ENCODE measurements at regions of chr16 and their contacts with region 1.

Region 1: GRCh38 chr16:56102183-56102686 is 89.1 kb upstream of the GNAO1 start:
- DNase-seq: peak; percentile 81 to 88 (median 84)
- ATAC-seq: peak; percentile 92 to 93
- H3K4me3 ChIP-seq: peak overlapping the region; percentile 11
- H3K27ac ChIP-seq: peak overlapping the region; percentile 95
- H3K4me1 ChIP-seq: no peaks in the 10 kb centered on the region
- H3K27me3 ChIP-seq: no peaks in the 10 kb centered on the region

Region 2: GRCh38 chr16:55955845-55956244 is 146.4 kb before region 1 on chr16:
- intact Hi-C with region 1: loop called in 1 of 4 experiments (anchors 10 kb)
- DNase-seq: peak; percentile 84 to 92 (median 88)
- ATAC-seq: peak; percentile 96 to 97
- H3K4me3 ChIP-seq: no peak overlapping the region
- H3K27ac ChIP-seq: peak overlapping the region; percentile 80
- H3K4me1 ChIP-seq: no peaks in the 10 kb centered on the region
- H3K27me3 ChIP-seq: no peaks in the 10 kb centered on the region

Region 3: DNA sequence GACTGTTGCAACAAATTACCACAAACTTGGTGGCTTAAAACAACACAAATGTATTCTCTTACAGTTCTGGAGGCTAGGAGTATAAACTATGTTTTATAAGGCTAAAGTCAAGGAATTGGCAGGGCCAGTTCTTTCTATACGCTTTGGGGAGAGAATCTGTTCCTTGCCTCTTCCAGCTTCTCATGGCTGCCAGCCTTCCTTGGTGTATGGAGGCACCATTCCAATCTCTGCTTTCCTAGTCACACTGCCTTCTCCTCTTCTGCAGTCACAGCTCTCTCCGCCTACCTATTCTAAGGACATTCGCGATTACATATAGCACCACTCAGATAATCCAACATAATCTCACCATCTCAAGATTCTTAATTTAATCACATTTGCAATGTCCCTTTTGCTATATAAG is 51.3 kb before region 1 on chr16:
- intact Hi-C with region 1: loop called in 1 of 4 experiments (anchors 5 kb)
- DNase-seq: no peak
- ATAC-seq: no peak
- H3K4me3 ChIP-seq: no peak overlapping the region
- H3K27ac ChIP-seq: no peak overlapping the region
- H3K4me1 ChIP-seq: no peaks in the 10 kb centered on the region
- H3K27me3 ChIP-seq: no peaks in the 10 kb centered on the region

Region 4: DNA sequence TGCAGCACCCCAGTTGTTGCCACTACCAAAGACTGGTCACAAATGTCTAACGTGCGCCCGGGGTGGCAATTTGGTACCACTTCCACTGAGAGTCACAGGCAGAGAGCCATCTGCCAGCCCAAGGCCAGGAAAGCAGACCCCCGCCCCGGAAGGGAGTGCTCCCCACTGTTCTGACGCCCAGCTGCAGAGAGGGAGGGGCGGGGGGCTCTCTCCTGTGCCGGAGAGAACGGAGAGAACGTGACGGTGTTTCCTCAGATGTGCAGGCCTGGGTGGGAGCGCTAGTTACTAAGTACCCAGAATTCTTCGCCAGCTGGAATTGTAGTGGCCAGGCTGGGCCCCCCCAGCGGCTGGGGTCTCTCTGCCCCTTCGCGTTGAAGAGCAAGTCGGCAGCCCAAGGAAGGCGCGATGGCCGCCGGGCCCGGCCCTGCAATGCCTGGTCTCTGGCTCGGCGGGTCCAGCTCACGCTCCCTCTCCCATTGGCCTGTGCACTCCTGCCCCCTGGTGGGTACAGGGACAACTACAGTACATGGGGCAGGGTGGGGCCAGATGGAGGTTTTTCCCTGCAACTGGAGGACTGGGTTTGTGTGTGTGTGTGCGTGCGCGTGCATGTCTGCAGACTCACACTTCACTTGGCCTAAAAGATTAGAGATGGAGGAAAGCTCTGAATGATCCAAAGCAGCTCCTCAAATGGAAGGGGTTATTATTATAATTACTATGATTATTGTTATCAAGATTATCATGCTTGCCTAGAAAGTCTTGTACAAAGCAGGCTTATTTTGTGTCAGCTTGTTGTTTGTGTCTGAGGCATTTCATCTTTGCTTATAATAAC is 216.0 kb after region 1 on chr16:
- intact Hi-C with region 1: loop called in 1 of 4 experiments (anchors 10 kb)
- DNase-seq: peak; percentile 85 to 95 (median 93)
- ATAC-seq: peak; percentile 95 to 96
- H3K4me3 ChIP-seq: peak overlapping the region; percentile 11
- H3K27ac ChIP-seq: peak overlapping the region; percentile 6
- H3K4me1 ChIP-seq: no peaks in the 10 kb centered on the region
- H3K27me3 ChIP-seq: no peaks in the 10 kb centered on the region

Region 5: GRCh38 chr16:56348158-56349085 is 246.2 kb after region 1 on chr16:
- intact Hi-C with region 1: no loop called
- DNase-seq: peak; percentile 6 to 46 (median 39)
- ATAC-seq: no peak
- H3K4me3 ChIP-seq: no peak overlapping the region
- H3K27ac ChIP-seq: no peak overlapping the region
- H3K4me1 ChIP-seq: no peaks in the 10 kb centered on the region
- H3K27me3 ChIP-seq: no peaks in the 10 kb centered on the region